Aorta (tissue), 5 donors: ENCODE measurements at regions of chr13 and their contacts with region 1.

Region 1: GRCh38 chr13:19959831-19960652 is 1.5 kb downstream of the ZMYM2 start:
- DNase-seq: peak; percentile 90 to 92
- ATAC-seq: peak; percentile 78
- H3K4me3 ChIP-seq: peak overlapping the region; percentile 83 to 95
- H3K27ac ChIP-seq: peak overlapping the region in 1 of 2 donors; percentile 95
- H3K4me1 ChIP-seq: no peaks in the 10 kb centered on the region
- H3K27me3 ChIP-seq: no peaks in the 10 kb centered on the region

Region 2: GRCh38 chr13:19863323-19864023 is 96.6 kb before region 1 on chr13 and contains the start of gene ZMYM5:
- intact Hi-C with region 1: loop called (anchors 2 to 5 kb)
- DNase-seq: peak; percentile 99 to 100
- ATAC-seq: peak; percentile 98
- H3K4me3 ChIP-seq: peak within 1 kb of the TSS; percentile 62 to 67
- H3K27ac ChIP-seq: peak within 1 kb of the TSS; percentile 83 to 94
- H3K4me1 ChIP-seq: peaks cover 0 to 2% of the 10 kb centered on the region in 2 donors
- H3K27me3 ChIP-seq: no peaks in the 10 kb centered on the region
- total RNA-seq, gene ZMYM5: 12.4 to 19.5 TPM